AG04450 (cell line): ENCODE measurements at regions of chr9 and their contacts with region 1.

Region 1: GRCh38 chr9:84206801-84207370 is 133.7 kb downstream of the SLC28A3 start:
- DNase-seq: no peak
- H3K4me3 ChIP-seq: no peak overlapping the region
- H3K27ac ChIP-seq: no peak overlapping the region
- H3K27me3 ChIP-seq: no peaks in the 10 kb centered on the region
- CTCF ChIP-seq: no peak

Region 2: GRCh38 chr9:83992421-83992820 is 214.5 kb before region 1 on chr9:
- CTCF ChIA-PET with region 1: no interaction called
- POLR2A ChIA-PET with region 1: interaction called, 15 read pairs
- DNase-seq: no peak
- H3K4me3 ChIP-seq: no peak overlapping the region
- H3K27ac ChIP-seq: no peak overlapping the region
- H3K27me3 ChIP-seq: no peaks in the 10 kb centered on the region
- CTCF ChIP-seq: no peak

Region 3: GRCh38 chr9:84187090-84187489 is 19.8 kb before region 1 on chr9:
- CTCF ChIA-PET with region 1: no interaction called
- POLR2A ChIA-PET with region 1: no interaction called
- DNase-seq: no peak
- H3K4me3 ChIP-seq: no peak overlapping the region
- H3K27ac ChIP-seq: peak overlapping the region; percentile 11
- H3K27me3 ChIP-seq: no peaks in the 10 kb centered on the region
- CTCF ChIP-seq: no peak